AG04450 (cell line): ENCODE measurements at regions of chr12 and their contacts with region 1.

Region 1: GRCh38 chr12:50283229-50283923 is at the start of gene LIMA1:
- DNase-seq: peak; percentile 55
- H3K4me3 ChIP-seq: peak within 1 kb of the TSS; percentile 95
- H3K27ac ChIP-seq: peak within 1 kb of the TSS; percentile 81
- H3K27me3 ChIP-seq: no peaks in the 10 kb centered on the region
- CTCF ChIP-seq: peak; percentile 65
- polyA plus RNA-seq, gene LIMA1: 177 and 218 TPM in 2 replicates

Region 2: DNA sequence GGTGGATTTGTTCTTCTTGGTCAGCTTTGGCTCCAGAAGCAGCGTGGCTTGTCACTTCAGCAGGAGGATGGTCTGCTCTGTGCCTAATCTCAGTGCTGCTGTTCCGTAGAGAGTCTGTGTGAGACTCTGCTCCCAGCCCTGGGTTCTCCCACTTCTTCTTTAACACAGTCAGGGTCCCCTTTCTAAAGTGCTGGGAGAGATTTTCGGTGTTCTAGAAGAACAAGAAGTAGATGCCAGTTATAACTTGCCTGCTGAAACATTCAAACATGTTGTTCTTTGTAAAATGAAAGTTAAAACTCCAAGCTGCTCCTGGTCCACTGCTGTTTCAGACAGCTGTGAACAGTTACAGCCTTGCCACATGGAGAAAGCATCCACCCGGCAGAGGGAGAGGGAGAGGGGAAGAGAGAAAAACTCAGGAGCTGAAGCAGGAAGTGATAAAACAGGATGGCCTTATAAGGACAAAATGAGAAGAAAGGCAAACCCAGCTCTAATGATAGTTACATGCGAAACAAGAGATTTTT is 61.0 kb before region 1 on chr12:
- CTCF ChIA-PET with region 1: interaction called, 7 read pairs
- POLR2A ChIA-PET with region 1: interaction called, 28 read pairs
- DNase-seq: peak; percentile 89
- H3K4me3 ChIP-seq: peak overlapping the region; percentile 93
- H3K27ac ChIP-seq: peak overlapping the region; percentile 97
- H3K27me3 ChIP-seq: no peaks in the 10 kb centered on the region
- CTCF ChIP-seq: peak; percentile 58

Region 3: DNA sequence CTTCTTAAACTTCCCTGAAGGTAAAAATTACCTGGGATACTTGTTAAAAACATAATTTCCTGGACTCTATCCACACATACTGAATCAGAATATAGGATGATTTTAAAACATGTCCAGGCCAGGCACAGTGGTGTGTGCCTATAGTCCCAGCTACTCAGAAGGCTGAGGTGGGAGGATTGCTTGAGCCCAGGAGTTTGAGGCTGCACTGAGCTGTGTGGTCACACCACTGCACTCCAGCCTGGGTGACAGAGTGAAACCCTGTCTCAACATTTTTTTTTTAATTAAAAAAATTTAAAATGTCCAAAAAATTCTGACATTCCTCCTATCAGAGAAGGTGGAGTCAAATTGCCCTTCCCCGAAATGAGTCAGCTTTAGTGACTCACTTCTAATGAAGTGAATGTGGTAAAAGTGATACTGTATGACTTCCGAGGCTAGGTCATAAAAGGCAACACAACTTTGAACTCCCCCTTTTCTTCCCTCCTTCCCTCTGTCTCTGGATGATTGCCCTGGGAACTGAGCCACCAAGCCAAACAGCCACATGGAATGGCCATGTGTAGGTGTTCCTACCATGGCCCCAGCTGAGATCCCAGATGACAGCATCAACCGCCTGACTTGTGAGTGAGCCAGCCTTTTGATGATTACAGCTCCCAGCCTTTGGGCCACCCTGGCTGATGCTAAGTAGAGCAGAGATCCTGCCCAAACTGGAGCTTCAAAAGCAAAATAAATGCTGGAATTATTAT is 36.3 kb before region 1 on chr12:
- CTCF ChIA-PET with region 1: interaction called, 3 read pairs
- POLR2A ChIA-PET with region 1: interaction called, 20 read pairs
- DNase-seq: peak; percentile 87
- H3K4me3 ChIP-seq: no peak overlapping the region
- H3K27ac ChIP-seq: peak overlapping the region; percentile 90
- H3K27me3 ChIP-seq: no peaks in the 10 kb centered on the region
- CTCF ChIP-seq: no peak

Region 4: DNA sequence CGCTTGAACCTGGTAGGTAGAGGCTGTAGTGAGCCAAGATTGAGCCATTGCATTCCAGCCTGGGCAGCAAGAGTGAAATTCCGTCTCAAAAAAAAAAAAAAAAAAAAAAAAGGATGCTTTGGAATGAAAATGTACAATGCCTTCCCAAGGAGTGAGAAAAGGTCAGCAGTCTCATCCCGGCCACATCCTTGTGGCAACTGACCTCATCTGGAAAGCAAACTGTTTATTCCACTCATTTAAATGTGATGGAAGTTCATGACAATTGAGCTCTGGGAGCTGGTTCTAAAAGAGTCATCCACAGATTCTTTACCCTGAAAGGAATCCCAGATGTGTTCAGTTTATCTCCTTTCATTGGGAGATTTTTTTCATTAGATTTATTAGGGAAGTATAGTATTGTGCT is 19.3 kb after region 1 on chr12:
- CTCF ChIA-PET with region 1: interaction called, 3 read pairs
- POLR2A ChIA-PET with region 1: interaction called, 12 read pairs
- DNase-seq: no peak
- H3K4me3 ChIP-seq: no peak overlapping the region
- H3K27ac ChIP-seq: no peak overlapping the region
- H3K27me3 ChIP-seq: no peaks in the 10 kb centered on the region
- CTCF ChIP-seq: no peak

Region 5: DNA sequence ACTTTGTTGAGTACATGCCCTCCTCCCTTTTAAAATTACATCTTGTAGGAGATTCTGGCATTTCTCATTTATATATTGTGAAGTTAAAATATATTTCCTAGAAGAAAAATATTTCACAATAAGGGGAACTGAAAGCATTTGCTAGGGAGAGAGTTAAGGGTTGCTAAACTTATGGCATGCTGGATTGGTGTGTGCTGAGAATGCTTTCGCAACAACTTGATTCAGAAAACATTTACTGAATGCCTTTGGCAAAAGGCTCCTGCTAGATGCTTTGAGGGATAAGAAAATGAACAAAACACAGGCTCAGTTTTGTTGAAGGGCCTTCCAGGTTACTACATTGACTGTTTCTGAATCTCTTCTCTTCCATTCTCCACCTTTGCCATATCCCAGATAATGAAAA is 288.9 kb after region 1 on chr12:
- CTCF ChIA-PET with region 1: no interaction called
- POLR2A ChIA-PET with region 1: no interaction called
- DNase-seq: peak; percentile 73
- H3K4me3 ChIP-seq: no peak overlapping the region
- H3K27ac ChIP-seq: no peak overlapping the region
- H3K27me3 ChIP-seq: no peaks in the 10 kb centered on the region
- CTCF ChIP-seq: no peak

Region 6: DNA sequence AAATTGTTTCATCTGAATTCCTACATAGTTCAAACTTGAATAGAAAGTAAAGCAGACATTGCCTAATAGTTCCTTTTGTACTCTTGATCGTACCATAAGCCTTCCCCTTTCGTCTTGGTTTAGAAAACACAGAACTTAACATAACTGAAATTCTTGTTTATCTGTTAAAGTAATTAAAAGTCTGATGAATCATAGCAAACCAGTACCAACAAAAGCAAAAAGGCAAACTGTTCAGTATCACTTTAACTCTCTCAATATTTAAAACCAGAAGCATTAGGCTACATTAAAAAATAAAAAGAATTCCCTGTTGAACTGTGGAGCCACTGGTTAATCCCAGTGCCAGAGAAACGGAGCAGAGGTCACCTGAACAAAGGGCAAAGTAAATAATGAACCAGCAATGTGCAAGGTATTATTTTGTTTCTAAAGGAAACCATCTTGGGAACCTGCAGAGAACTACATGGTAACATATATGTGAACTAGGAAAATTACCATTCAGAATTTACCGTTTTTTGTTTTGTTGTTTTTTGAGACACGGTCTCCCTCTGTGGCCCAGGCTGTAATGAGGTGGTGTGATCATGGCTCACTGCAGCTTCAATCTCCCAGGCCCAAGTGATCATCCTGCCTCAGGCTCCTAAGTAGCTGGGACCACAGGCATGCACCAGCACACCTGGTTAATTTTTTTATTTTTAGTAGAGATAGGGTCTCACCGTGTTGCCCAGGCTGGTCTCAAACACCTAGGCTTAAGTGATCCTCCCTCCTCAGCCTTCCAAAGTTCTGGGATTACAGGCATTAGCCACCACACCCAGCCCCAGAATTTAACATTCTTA is 651.8 kb after region 1 on chr12:
- CTCF ChIA-PET with region 1: no interaction called
- POLR2A ChIA-PET with region 1: no interaction called
- DNase-seq: peak; percentile 26
- H3K4me3 ChIP-seq: peak overlapping the region; percentile 5; the same call in 1 of the 2 replicates
- H3K27ac ChIP-seq: peak overlapping the region; percentile 53
- H3K27me3 ChIP-seq: no peaks in the 10 kb centered on the region
- CTCF ChIP-seq: no peak